ENCODE measurements at regions of chr12 and their contacts with region 1.

Region 1: GRCh38 chr12:132614861-132615578 is 3.6 kb upstream of the P2RX2 start:
- DNase-seq: peak; percentile 52 to 68 (median 62)
- H3K4me3 ChIP-seq: no peak overlapping the region
- H3K4me3 Mint-ChIP-seq: peak overlapping the region in 1 of 2 donors; percentile 29
- H3K27ac ChIP-seq: no peak overlapping the region
- H3K27ac Mint-ChIP-seq: peak overlapping the region in 1 of 7 donors; percentile 30
- H3K4me1 ChIP-seq: no peaks in the 10 kb centered on the region
- H3K4me1 Mint-ChIP-seq: peaks cover 12% of the 10 kb centered on the region
- H3K27me3 ChIP-seq: peaks cover 18 to 62% of the 10 kb centered on the region in 2 donors
- H3K27me3 Mint-ChIP-seq: peaks cover 59 to 77% (median 62%) of the 10 kb centered on the region in 3 donors
- CTCF ChIP-seq: peak; percentile 82

Region 2: DNA sequence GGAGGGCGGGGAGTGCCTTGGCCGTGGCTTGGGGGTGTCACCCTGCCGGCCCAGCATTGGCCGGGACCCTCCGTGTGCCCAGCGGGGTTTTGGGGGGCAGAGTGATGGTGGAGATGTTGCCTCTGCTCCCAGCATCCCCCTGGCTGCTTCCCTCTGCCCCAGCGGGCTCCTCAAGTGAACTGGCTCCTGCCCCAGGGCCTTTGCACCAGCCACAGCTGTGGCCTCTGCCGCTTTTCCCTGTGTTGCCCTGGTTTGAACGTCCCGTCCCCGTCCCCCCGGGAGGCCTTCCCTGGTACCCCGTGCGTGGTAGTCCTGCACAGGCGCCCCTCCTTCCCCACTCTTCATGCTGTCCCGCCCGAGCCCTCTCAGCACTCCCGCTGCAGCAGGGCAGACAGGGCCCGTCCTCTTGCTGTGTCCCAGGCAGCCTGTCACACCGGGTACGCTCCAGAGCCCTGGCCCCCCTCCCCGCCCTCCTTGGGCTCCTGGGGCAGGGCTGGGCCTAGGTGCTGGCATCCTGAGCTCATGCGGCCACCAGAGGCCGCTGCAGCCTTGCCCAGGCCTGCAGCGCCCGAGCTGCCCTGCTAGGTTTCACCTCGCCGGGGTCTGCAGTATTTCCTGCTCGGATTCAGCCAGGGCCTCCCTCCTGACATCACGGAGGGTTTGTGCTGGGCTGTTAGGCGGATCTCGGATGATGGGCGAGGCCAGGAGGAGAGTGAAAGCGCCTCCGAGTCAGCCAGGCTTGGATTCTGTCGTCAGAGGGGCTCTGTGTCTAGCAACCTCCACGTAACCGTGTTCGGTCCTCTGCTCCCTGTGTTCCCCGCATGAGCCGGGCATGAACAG is 461.3 kb before region 1 on chr12:
- intact Hi-C with region 1: loop called in 1 of 2 experiments (anchors 5 kb)
- DNase-seq: peak; percentile 59 to 66 (median 66)
- H3K4me3 ChIP-seq: peak overlapping the region in 1 of 3 experiments; percentile 35
- H3K4me3 Mint-ChIP-seq: peak overlapping the region; percentile 50 to 74
- H3K27ac ChIP-seq: no peak overlapping the region
- H3K27ac Mint-ChIP-seq: peak overlapping the region in 2 of 7 donors; percentile 49 to 61
- H3K4me1 ChIP-seq: peaks cover 4 to 7% of the 10 kb centered on the region in 2 donors
- H3K4me1 Mint-ChIP-seq: peaks cover 7% of the 10 kb centered on the region
- H3K27me3 ChIP-seq: no peaks in the 10 kb centered on the region
- H3K27me3 Mint-ChIP-seq: peaks cover 0 to 5% (median 1%) of the 10 kb centered on the region in 3 donors
- CTCF ChIP-seq: peak; percentile 93

Region 3: DNA sequence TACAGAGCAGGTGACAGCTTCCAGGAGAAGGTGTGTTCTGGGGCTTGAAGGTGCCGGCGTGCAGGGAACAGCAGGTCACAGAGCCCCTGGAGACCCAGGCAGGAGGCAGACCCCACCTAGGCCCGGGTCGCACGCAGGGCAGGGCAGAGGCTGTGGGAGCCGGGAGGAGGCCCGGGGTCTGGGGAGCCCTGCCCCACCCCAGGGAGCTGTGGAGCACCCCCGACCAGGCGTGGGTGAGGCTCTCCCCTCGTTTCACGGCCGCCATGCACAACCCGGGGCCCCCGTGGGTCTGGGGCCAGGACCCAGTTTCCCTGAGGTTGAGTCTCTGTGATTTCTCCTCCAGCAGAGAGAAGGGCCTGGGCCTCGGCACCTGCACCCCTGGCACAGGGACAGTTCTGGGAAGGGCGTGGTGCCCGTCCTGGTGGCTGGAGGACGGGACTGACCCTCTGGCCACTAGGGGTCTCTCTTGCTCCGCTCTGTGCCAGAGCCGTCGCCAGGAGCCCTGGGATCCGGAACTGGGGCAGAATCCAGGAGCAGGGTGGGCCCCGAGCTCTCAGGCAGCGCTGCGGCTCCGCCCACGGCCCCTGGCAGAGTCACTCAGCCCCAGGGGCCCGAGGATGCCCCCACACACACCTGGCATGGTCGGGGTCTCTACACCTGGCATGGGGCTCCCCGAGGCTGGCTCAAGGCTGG is 200.2 kb before region 1 on chr12:
- intact Hi-C with region 1: loop called (anchors 5 kb)
- DNase-seq: peak; percentile 70 to 78 (median 77)
- H3K4me3 ChIP-seq: no peak overlapping the region
- H3K4me3 Mint-ChIP-seq: no peak overlapping the region
- H3K27ac ChIP-seq: no peak overlapping the region
- H3K27ac Mint-ChIP-seq: no peak overlapping the region
- H3K4me1 ChIP-seq: peaks cover 6 to 10% of the 10 kb centered on the region in 2 donors
- H3K4me1 Mint-ChIP-seq: no peaks in the 10 kb centered on the region
- H3K27me3 ChIP-seq: peaks cover 0 to 10% of the 10 kb centered on the region in 2 donors
- H3K27me3 Mint-ChIP-seq: peaks cover 7 to 27% (median 10%) of the 10 kb centered on the region in 3 donors
- CTCF ChIP-seq: peak; percentile 96

Region 4: GRCh38 chr12:132748319-132748718 is 133.3 kb after region 1 on chr12:
- intact Hi-C with region 1: no loop called
- DNase-seq: no peak
- H3K4me3 ChIP-seq: no peak overlapping the region
- H3K4me3 Mint-ChIP-seq: no peak overlapping the region
- H3K27ac ChIP-seq: no peak overlapping the region
- H3K27ac Mint-ChIP-seq: no peak overlapping the region
- H3K4me1 ChIP-seq: no peaks in the 10 kb centered on the region
- H3K4me1 Mint-ChIP-seq: no peaks in the 10 kb centered on the region
- H3K27me3 ChIP-seq: no peaks in the 10 kb centered on the region
- H3K27me3 Mint-ChIP-seq: no peaks in the 10 kb centered on the region
- CTCF ChIP-seq: no peak

Measured in CD14-positive monocyte (primary cell).